ENCODE measurements at regions of chr13 and their contacts with region 1.

Region 1: GRCh38 chr13:97221989-97222700 is at the start of gene MBNL2:
- DNase-seq: peak; percentile 88
- ATAC-seq: peak; percentile 97
- total RNA-seq, gene MBNL2: 52.0 to 60.3 TPM

Region 2: GRCh38 chr13:97174638-97175037 is 47.5 kb before region 1 on chr13:
- intact Hi-C with region 1: no loop called
- DNase-seq: no peak
- ATAC-seq: no peak

Region 3: DNA sequence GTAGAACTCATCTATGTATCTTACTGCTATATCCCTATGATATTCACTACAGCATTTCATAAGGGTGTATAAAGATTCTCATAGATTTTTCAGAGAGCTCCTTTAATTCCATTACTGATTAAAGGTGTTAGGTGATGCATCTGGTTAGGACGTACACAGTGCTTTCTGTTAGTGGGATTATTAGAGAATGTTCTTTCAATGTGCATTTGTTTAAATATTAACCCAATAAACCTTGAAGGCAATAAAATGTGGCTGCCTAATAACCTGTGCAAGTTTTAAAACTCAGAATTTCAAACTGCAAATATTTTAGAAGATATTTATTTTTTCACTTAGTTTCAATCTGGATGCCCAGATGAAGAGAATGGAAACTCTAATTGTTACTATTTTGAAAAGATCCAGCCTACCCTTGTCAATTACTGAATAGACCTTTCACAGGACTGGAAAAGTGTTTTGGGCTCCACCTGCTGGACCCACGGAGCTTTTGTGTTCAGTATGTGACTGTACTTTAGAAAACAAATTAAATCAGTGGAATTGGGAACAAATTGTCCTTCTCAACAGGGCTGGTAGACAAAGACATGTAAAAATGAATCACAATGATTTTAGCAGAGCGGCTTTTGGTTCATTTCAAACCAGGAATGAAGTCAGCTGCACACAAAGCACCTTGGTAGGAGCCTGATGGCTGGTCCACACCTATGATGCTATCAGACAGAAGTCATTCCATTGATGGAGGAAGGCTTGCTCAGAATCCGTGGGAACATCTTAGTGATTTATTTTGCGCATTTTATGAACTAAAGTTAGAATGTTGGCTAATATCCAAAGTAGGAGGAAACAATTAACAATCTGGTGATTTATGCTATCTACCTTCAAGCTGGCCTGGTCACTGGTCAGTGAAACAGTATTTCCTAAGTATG is 122.4 kb after region 1 on chr13:
- intact Hi-C with region 1: loop called (anchors 5 kb)
- DNase-seq: peak; percentile 62
- ATAC-seq: peak; percentile 81 to 84

Region 4: DNA sequence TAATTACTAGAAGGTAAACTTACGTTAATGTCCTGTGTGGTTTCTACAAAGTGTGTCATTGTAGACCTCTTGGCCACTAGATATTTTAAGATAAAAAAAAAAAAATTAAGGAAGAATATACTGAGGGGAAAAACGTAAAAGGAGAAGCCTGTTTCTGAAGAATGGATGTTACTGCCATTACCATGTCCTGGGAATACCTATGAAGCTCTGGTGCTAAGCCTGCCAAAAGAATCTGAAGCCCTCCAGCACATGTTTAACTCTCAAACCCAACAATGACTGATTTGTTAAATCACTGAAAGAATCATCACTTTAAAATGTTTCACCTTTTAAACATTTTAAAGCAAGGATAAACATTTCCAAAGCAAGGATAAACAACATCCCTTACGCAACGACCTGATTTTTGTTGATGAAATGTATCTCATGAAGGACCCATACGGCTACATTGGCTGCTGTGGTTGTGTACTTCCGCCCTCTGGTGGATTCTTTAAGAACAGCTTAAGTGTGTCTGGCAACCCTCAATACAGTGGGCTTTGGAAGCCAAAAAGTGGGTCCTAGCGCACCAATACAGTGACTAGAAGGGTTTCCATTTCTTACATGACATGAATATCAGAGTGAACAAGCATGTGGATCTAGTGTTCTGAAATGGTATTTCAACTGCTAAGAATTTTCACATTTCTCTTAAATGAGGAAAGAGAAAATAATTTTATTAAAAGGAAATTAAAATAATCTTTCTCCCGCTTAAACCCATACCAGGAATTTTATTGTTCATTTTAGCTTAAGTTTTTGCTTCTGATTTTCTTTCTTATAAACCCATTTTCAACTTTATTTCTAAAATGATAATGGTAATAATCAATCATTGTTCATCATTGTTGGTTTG is 137.3 kb after region 1 on chr13:
- intact Hi-C with region 1: loop called in 1 of 2 experiments (anchors 5 kb)
- DNase-seq: no peak
- ATAC-seq: peak; percentile 90 to 94

Region 5: GRCh38 chr13:97432917-97433726 is 211.0 kb after region 1 on chr13:
- intact Hi-C with region 1: loop called in 1 of 2 experiments (anchors 10 kb)
- DNase-seq: peak; percentile 99
- ATAC-seq: peak; percentile 90 to 94

Measured in left cardiac atrium (tissue), 4 donors.